PC-9 (cell line): ENCODE measurements at regions of chr19 and their contacts with region 1.

Region 1: DNA sequence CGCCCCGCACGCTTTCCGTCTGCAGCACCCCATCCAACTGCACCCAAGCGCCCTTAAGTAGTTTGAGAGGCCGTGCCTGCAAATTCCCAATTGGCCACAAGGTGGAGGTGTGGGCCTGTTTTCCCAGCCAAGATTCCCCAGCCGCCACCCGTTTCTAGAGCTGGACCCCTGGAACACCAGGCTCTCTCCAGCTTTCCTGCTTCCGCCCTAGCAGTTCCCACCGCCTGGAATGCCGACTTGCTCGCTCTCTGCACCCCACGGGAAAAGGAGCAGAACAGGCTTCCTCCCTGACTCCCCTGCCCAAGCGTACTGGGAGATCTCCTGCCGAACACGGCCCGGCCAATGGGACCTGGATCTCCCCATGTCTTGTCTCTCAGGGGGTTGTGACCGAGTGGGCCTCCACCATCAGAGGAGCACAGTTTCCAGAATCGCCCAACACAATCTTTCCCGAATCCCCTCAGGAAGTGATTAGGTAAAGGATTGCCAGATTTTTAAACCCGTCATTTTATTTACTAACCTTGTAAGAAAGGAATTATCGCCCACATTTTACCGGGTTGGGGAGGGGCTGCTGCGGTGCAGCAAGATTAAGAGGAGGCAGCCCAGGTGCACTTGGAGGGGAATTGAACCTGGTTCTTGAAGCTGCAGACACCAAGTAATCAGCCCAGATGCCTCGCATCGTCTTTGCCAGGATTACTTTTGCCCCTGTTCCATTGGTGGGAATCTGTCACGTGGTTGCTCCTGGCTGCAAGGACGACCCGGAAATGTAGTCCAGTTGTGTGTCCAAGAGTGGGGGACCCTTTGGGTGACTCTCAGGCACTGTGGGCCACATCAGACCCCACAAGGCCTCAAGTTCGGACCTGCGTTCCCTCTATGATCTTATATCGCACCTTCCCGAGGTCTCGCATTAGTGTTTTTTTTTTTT is 3.5 kb upstream of the NAPSA start:
- DNase-seq: peak; percentile 68 to 83
- H3K4me3 ChIP-seq: peak overlapping the region; percentile 84
- H3K27ac ChIP-seq: no peak overlapping the region
- H3K4me1 ChIP-seq: no peaks in the 10 kb centered on the region
- H3K27me3 ChIP-seq: no peaks in the 10 kb centered on the region
- CTCF ChIP-seq: peak; percentile 97

Region 2: DNA sequence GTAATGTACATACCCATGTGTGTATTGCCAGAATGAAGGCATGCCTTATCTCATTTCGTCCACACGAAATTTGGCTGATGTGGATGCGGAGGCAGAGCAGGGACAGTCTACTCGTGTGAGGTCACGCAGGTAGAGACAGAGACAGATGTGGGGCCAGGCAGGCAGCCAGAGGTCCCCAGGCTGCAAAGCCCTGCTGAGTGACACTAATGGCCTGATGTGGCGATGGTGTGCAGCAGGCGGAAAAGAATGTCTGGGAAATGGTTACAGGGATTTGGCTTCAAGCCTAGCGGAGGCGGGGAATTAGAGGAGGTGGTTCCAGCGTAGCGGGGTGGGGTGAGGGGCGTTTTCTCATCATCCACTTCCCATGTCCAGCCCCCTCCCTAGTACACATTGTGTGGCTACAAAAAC is 201.6 kb before region 1 on chr19:
- CTCF ChIA-PET with region 1: no interaction called
- POLR2A ChIA-PET with region 1: no interaction called
- intact Hi-C with region 1: loop called (anchors 5 kb)
- DNase-seq: peak; percentile 73 to 82
- H3K4me3 ChIP-seq: no peak overlapping the region
- H3K27ac ChIP-seq: peak overlapping the region; percentile 57
- H3K4me1 ChIP-seq: peaks cover 65% of the 10 kb centered on the region
- H3K27me3 ChIP-seq: no peaks in the 10 kb centered on the region
- CTCF ChIP-seq: no peak

Region 3: DNA sequence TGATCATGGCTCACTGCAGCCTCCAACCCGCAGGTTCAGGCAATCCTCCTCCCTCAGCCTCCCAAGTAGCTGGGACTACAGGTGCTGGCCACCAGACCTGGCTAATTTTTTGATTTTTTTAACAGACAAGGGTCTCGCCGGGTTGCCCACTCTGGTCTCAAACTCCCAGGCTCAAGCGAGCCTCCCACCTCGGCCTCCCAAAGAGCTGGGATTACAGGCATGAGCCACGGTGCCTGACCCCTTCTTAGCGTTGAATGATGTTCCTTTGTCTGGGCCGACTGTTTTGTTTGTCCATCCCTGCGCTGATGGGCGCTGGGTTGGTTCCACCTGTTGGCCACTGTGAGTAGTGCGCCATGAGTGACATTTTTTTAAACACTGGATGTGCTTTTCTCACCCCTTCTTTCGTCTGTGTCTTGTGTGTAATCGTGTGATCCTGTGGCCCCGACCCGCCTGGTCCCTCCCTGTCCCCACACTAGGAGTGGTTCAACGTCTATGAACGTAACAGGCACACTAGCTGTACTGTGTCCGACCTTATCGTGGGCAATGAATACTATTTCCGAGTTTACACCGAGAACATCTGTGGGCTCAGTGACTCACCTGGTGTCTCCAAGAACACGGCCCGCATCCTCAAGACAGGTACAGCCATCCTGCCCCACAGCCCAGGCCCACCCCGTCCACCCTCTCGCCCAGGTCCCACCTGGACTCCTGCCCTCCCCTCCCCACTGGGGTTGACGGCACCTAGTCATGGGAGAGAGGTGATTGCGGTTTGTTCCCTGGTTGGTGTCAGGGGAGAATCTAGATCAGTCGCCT is 92.4 kb after region 1 on chr19:
- CTCF ChIA-PET with region 1: interaction called, 6 read pairs
- POLR2A ChIA-PET with region 1: interaction called, 5 read pairs
- intact Hi-C with region 1: loop called (anchors 1 kb)
- DNase-seq: peak; percentile 46 to 65
- H3K4me3 ChIP-seq: no peak overlapping the region
- H3K27ac ChIP-seq: no peak overlapping the region
- H3K4me1 ChIP-seq: peaks cover 8% of the 10 kb centered on the region
- H3K27me3 ChIP-seq: peaks cover 23% of the 10 kb centered on the region
- CTCF ChIP-seq: peak; percentile 90

Region 4: GRCh38 chr19:50511068-50511822 is 142.3 kb after region 1 on chr19 and contains the start of gene JOSD2:
- CTCF ChIA-PET with region 1: no interaction called
- POLR2A ChIA-PET with region 1: interaction called, 13 read pairs
- intact Hi-C with region 1: loop called (anchors 1 kb)
- DNase-seq: peak; percentile 97 to 99
- H3K4me3 ChIP-seq: peak within 1 kb of the TSS; percentile 65
- H3K27ac ChIP-seq: peak within 1 kb of the TSS; percentile 40; the same call in 1 of the 2 replicates
- H3K4me1 ChIP-seq: peaks cover 6% of the 10 kb centered on the region
- H3K27me3 ChIP-seq: no peaks in the 10 kb centered on the region
- CTCF ChIP-seq: no peak
- total RNA-seq, gene JOSD2: 44.3 and 56.0 TPM in 2 replicates

Region 5: GRCh38 chr19:50705422-50706019 is 336.6 kb after region 1 on chr19:
- CTCF ChIA-PET with region 1: no interaction called
- POLR2A ChIA-PET with region 1: no interaction called
- intact Hi-C with region 1: loop called (anchors 2 kb)
- DNase-seq: peak; percentile 49 to 55
- H3K4me3 ChIP-seq: no peak overlapping the region
- H3K27ac ChIP-seq: no peak overlapping the region
- H3K4me1 ChIP-seq: no peaks in the 10 kb centered on the region
- H3K27me3 ChIP-seq: peaks cover 91% of the 10 kb centered on the region
- CTCF ChIP-seq: peak; percentile 75

Region 6: GRCh38 chr19:51097166-51097738 is 728.3 kb after region 1 on chr19:
- CTCF ChIA-PET with region 1: no interaction called
- POLR2A ChIA-PET with region 1: no interaction called
- intact Hi-C with region 1: loop called (anchors 2 kb)
- DNase-seq: peak; percentile 62 to 69
- H3K4me3 ChIP-seq: no peak overlapping the region
- H3K27ac ChIP-seq: no peak overlapping the region
- H3K4me1 ChIP-seq: no peaks in the 10 kb centered on the region
- H3K27me3 ChIP-seq: no peaks in the 10 kb centered on the region
- CTCF ChIP-seq: peak; percentile 85